ENCODE measurements at regions of chr2 and their contacts with region 1.

Region 1: DNA sequence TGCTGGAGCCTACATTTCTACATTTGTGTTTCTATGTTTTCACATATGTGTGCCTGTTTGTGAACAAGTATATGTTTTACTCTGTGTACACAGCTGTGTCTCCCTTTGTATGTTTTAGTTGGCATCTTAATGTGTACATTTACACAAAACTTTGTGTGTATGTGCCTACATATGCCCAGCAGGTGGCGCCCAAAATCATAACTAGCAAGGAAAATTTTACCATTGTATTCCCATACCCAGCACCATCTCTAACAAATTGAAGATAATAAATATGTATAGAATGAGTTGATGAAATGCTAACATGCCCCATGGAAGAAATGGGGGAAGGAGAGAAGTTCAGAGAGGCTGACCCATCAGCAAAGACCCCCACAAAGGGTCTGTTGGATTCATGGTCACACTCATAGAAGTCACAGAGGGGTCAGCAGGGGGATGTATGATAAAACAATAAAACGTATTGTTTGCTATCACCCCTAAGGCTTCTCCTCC is 48.1 kb downstream of the PKDCC start:
- DNase-seq: peak; percentile 87
- H3K4me3 ChIP-seq: no peak overlapping the region
- H3K27ac ChIP-seq: no peak overlapping the region
- H3K4me1 ChIP-seq: peaks cover 7% of the 10 kb centered on the region
- H3K27me3 ChIP-seq: no peaks in the 10 kb centered on the region
- CTCF ChIP-seq: peak; percentile 90

Region 2: DNA sequence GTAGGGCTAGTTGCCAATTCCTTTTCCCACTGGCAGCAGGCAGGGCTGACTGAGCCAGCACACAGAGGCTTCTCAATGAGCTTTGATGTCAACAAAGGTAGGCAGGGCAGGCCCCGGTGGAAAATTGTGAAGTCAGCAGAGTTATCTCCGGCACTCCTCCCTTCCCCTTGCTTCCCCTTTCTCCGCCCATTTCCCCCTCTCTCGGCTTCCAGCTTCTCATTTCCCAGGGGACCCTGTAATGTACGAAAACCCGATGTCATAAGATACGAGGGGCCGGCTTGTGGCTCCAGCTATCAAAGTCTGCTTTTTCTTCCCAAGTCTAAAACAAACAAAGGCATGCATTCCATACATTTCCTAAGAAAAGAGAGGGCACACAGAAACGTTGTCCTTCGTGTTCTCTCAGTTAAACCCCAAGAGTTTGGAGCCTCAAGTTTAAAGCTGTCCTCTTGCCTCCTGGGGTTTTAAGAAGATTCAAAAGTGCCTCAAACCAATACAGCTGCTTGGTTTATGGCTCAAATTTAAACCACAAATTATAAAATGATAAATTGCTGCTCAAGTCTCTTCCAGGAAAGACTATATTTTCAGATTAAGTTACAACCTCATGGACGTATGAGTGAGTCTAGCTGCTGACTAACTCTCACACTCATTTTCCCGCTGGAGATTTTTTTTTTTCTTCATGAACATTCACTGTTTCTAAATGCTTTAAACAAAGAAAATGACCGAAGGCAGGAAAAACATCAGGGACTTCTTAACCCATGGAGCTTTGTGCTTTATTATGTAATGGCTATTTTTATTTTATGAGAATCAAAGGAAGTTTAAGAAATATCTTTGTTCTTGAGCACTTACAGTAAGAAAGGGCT is 46.0 kb after region 1 on chr2:
- CTCF ChIA-PET with region 1: no interaction called
- POLR2A ChIA-PET with region 1: no interaction called
- intact Hi-C with region 1: no loop called
- DNase-seq: peak; percentile 98
- H3K4me3 ChIP-seq: peak overlapping the region; percentile 3
- H3K27ac ChIP-seq: peak overlapping the region; percentile 91
- H3K4me1 ChIP-seq: peaks cover 68% of the 10 kb centered on the region
- H3K27me3 ChIP-seq: no peaks in the 10 kb centered on the region
- CTCF ChIP-seq: no peak

Region 3: GRCh38 chr2:42169874-42170521 is 74.0 kb after region 1 on chr2:
- CTCF ChIA-PET with region 1: no interaction called
- POLR2A ChIA-PET with region 1: no interaction called
- intact Hi-C with region 1: loop called (anchors 2 kb)
- DNase-seq: peak; percentile 24
- H3K4me3 ChIP-seq: peak overlapping the region; percentile 69
- H3K27ac ChIP-seq: peak overlapping the region; percentile 81
- H3K4me1 ChIP-seq: peaks cover 24% of the 10 kb centered on the region
- H3K27me3 ChIP-seq: no peaks in the 10 kb centered on the region
- CTCF ChIP-seq: no peak

Region 4: GRCh38 chr2:42196403-42197267 is 100.7 kb after region 1 on chr2:
- CTCF ChIA-PET with region 1: no interaction called
- POLR2A ChIA-PET with region 1: no interaction called
- intact Hi-C with region 1: loop called (anchors 1 kb)
- DNase-seq: peak; percentile 84
- H3K4me3 ChIP-seq: no peak overlapping the region
- H3K27ac ChIP-seq: peak overlapping the region; percentile 49
- H3K4me1 ChIP-seq: peaks cover 45% of the 10 kb centered on the region
- H3K27me3 ChIP-seq: no peaks in the 10 kb centered on the region
- CTCF ChIP-seq: peak; percentile 74

Region 5: DNA sequence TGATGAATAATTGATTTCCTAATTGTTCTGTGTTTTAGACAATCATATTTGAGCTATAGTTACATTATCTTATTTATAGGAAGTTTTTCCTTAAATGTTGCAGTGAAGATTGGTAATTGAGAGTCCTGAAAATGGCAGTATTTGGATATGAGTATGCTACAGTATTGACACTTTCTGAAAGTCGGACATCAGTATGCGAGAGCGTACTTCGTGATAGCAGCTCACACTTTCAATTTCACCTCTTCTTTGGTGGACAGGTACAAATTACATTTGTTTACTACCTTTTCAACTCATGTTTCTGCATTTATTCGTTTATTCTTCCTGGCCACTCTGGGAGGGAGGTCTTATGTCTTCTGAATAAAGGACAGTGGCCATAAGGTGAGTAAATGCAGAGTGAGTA is 111.9 kb after region 1 on chr2:
- CTCF ChIA-PET with region 1: no interaction called
- POLR2A ChIA-PET with region 1: no interaction called
- intact Hi-C with region 1: no loop called
- DNase-seq: no peak
- H3K4me3 ChIP-seq: no peak overlapping the region
- H3K27ac ChIP-seq: no peak overlapping the region
- H3K4me1 ChIP-seq: peaks cover 5% of the 10 kb centered on the region
- H3K27me3 ChIP-seq: no peaks in the 10 kb centered on the region
- CTCF ChIP-seq: no peak

Region 6: GRCh38 chr2:42223855-42224268 is 127.9 kb after region 1 on chr2:
- CTCF ChIA-PET with region 1: no interaction called
- POLR2A ChIA-PET with region 1: no interaction called
- intact Hi-C with region 1: no loop called
- DNase-seq: peak; percentile 26
- H3K4me3 ChIP-seq: no peak overlapping the region
- H3K27ac ChIP-seq: peak overlapping the region; percentile 31
- H3K4me1 ChIP-seq: peaks cover 32% of the 10 kb centered on the region
- H3K27me3 ChIP-seq: no peaks in the 10 kb centered on the region
- CTCF ChIP-seq: no peak

Region 7: GRCh38 chr2:42238644-42239288 is 142.8 kb after region 1 on chr2:
- CTCF ChIA-PET with region 1: interaction called, 5 read pairs
- POLR2A ChIA-PET with region 1: no interaction called
- intact Hi-C with region 1: loop called (anchors 1 kb)
- DNase-seq: peak; percentile 50
- H3K4me3 ChIP-seq: no peak overlapping the region
- H3K27ac ChIP-seq: no peak overlapping the region
- H3K4me1 ChIP-seq: peaks cover 33% of the 10 kb centered on the region
- H3K27me3 ChIP-seq: no peaks in the 10 kb centered on the region
- CTCF ChIP-seq: peak; percentile 49; the same call in 1 of the 2 replicates

Region 8: GRCh38 chr2:42328148-42328833 is 232.3 kb after region 1 on chr2:
- CTCF ChIA-PET with region 1: interaction called, 15 read pairs
- POLR2A ChIA-PET with region 1: no interaction called
- intact Hi-C with region 1: loop called (anchors 1 kb)
- DNase-seq: peak; percentile 56
- H3K4me3 ChIP-seq: no peak overlapping the region
- H3K27ac ChIP-seq: no peak overlapping the region
- H3K4me1 ChIP-seq: peaks cover 11% of the 10 kb centered on the region
- H3K27me3 ChIP-seq: no peaks in the 10 kb centered on the region
- CTCF ChIP-seq: peak; percentile 63

Region 9: GRCh38 chr2:42736598-42737322 is 640.8 kb after region 1 on chr2:
- CTCF ChIA-PET with region 1: no interaction called
- POLR2A ChIA-PET with region 1: no interaction called
- intact Hi-C with region 1: no loop called
- DNase-seq: no peak
- H3K4me3 ChIP-seq: no peak overlapping the region
- H3K27ac ChIP-seq: no peak overlapping the region
- H3K4me1 ChIP-seq: no peaks in the 10 kb centered on the region
- H3K27me3 ChIP-seq: no peaks in the 10 kb centered on the region
- CTCF ChIP-seq: no peak

Measured in A673 (cell line).